Cardiac septum (tissue), 1 donor: ENCODE measurements at regions of chr21 and their contacts with region 1.

Region 1: GRCh38 chr21:41612674-41613532 is 104.9 kb upstream of the TMPRSS2 start:
- DNase-seq: peak; percentile 80

Region 2: GRCh38 chr21:41777951-41778874 is 165.3 kb after region 1 on chr21:
- intact Hi-C with region 1: loop called (anchors 1 kb)
- DNase-seq: peak; percentile 86

Region 3: DNA sequence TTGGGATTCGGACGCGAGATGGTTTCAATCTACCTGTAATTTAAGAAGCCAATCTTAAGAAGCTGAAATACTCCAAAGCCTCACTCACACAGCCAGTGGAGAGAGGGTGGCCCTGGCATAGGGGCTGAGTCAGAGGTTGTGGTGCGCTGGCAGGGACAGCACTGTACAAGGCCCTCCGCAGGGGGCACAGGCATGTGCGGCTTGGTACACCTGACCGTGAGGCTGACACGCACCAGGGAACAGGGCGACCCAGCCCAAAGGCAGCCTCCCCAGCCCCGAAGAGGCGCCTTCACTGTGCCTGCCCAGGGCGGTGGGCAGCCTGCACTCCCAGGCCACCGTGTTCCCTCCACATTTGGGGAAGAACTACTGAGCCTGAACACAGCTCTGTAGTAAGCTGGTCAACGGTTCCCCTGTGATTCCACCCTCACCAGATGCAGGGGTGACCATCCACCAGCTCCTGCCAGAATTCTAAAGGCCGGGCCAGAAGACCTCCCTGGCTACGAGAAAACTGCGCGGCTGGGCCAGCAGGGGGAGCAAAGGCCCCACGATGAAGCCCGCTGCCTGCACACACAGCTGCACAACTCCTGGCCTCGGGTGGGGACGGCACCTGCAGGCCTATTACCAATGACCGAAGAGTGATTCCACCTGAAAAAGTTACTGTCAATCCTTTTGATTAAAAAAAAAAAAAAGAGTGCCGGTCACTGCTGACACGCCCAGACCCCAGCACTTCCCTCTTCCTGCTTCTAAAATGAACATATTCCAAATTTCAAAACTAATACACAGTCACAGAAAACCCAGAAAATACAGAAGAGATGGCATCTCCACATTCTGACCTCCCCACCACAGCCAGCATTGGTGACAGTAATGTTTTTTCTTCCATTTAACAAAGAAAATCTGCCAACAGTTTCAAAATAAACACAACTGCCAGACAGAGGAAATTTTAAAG is 203.6 kb after region 1 on chr21:
- intact Hi-C with region 1: loop called (anchors 5 kb)
- DNase-seq: peak; percentile 77